ENCODE measurements at regions of chr14 and their contacts with region 1.

Region 1: DNA sequence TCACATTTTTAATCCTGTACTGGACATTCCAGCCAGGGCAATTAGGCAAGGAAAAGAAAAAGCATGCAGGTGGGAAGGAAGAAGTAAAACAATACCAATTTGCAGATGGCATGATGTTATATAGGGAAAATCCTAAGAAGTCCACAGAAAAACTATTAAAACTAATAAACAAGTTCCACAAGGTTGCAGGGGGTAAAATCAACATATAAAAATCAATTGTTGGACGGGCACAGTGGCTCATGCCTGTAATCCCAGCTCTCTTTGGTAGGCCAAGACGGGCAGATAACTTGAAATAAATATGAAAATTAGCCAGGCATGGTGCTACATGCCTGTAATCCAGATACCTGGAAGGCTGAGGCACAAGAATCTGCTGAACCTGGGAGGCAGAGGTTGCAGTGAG is 31.9 kb downstream of the SEC23A start:
- DNase-seq: no peak
- ATAC-seq: no peak
- H3K4me3 ChIP-seq: no peak overlapping the region
- H3K4me3 Mint-ChIP-seq: peak overlapping the region in 1 of 3 donors; percentile 11
- H3K27ac ChIP-seq: no peak overlapping the region
- H3K27ac Mint-ChIP-seq: no peak overlapping the region
- H3K4me1 ChIP-seq: no peaks in the 10 kb centered on the region
- H3K4me1 Mint-ChIP-seq: peaks cover 0 to 12% (median 8%) of the 10 kb centered on the region in 3 donors
- H3K27me3 ChIP-seq: no peaks in the 10 kb centered on the region
- H3K27me3 Mint-ChIP-seq: no peaks in the 10 kb centered on the region

Region 2: GRCh38 chr14:39055786-39056474 is 15.2 kb before region 1 on chr14:
- CTCF ChIA-PET with region 1: no interaction called
- POLR2A ChIA-PET with region 1: no interaction called
- DNase-seq: peak in 1 of 35 experiments; percentile 5
- ATAC-seq: no peak
- H3K4me3 ChIP-seq: no peak overlapping the region
- H3K4me3 Mint-ChIP-seq: no peak overlapping the region
- H3K27ac ChIP-seq: no peak overlapping the region
- H3K27ac Mint-ChIP-seq: no peak overlapping the region
- H3K4me1 ChIP-seq: no peaks in the 10 kb centered on the region
- H3K4me1 Mint-ChIP-seq: no peaks in the 10 kb centered on the region
- H3K27me3 ChIP-seq: no peaks in the 10 kb centered on the region
- H3K27me3 Mint-ChIP-seq: no peaks in the 10 kb centered on the region

Region 3: DNA sequence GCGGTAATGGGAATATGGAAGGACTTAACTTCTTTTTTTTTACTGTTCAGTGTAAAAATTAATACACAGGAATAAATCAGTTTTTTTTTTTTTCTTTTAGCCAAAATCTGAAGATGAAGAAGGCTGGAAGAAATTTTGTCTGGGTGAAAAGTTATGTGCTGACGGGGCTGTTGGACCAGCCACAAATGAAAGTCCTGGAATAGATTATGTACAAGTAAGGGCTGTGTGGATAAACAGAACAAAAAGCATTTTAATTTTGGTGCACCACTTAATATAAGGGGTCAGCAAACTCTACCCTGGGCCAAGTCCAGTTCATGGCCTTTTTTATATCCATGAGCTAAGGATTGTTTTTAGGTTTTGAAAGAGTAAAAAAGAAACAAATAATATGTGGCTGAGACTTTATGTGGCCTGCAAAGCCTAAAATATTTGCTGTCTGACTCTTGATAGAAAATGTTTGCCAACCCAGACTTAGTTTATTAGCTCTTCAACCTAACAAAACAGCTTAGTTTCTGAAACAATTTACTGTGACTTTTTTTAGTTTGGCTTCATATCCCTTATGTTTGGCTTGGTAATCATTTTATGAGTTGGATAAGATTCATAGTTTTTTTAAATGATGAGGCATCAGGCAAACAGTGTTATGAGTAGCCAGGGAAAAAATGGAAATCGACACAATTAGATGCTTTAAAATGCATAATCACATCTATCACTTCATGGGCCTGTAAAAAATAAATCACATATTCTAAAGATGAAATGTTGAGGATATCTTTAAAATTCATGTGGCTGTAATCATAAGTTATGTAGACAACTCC is 51.4 kb after region 1 on chr14:
- CTCF ChIA-PET with region 1: no interaction called
- POLR2A ChIA-PET with region 1: interaction called in 1 of 2 experiments, 11 read pairs
- DNase-seq: no peak
- ATAC-seq: no peak
- H3K4me3 ChIP-seq: no peak overlapping the region
- H3K4me3 Mint-ChIP-seq: no peak overlapping the region
- H3K27ac ChIP-seq: no peak overlapping the region
- H3K27ac Mint-ChIP-seq: no peak overlapping the region
- H3K4me1 ChIP-seq: no peaks in the 10 kb centered on the region
- H3K4me1 Mint-ChIP-seq: peaks cover under 1 to 4% (median 3%) of the 10 kb centered on the region in 3 donors
- H3K27me3 ChIP-seq: no peaks in the 10 kb centered on the region
- H3K27me3 Mint-ChIP-seq: no peaks in the 10 kb centered on the region

Measured in T-cell (primary cell).